Cardiac septum (tissue), 1 donor: ENCODE measurements at regions of chr3 and their contacts with region 1.

Region 1: GRCh38 chr3:122679085-122679881 is 1.4 kb upstream of the PARP14 start:
- DNase-seq: peak; percentile 90

Region 2: DNA sequence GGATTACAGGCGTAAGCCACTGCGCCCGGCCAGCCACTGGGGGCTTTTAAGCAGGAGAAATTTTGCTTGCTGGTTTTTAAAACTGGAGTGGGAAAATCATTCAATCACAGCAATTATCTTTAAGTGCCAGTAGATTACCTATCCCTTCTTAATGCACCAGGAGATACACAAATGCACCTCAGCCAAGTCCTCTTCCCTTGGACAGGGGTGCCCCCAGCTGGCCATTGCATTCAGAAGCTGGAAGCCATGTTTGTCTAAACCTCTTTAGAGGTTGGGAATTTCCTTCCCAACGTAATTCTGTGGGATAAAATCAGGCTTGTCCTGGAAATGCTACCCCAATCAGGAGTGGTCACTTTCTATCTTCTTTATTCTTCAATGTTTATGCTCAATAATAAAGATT is 322.9 kb before region 1 on chr3:
- intact Hi-C with region 1: no loop called
- DNase-seq: no peak

Region 3: DNA sequence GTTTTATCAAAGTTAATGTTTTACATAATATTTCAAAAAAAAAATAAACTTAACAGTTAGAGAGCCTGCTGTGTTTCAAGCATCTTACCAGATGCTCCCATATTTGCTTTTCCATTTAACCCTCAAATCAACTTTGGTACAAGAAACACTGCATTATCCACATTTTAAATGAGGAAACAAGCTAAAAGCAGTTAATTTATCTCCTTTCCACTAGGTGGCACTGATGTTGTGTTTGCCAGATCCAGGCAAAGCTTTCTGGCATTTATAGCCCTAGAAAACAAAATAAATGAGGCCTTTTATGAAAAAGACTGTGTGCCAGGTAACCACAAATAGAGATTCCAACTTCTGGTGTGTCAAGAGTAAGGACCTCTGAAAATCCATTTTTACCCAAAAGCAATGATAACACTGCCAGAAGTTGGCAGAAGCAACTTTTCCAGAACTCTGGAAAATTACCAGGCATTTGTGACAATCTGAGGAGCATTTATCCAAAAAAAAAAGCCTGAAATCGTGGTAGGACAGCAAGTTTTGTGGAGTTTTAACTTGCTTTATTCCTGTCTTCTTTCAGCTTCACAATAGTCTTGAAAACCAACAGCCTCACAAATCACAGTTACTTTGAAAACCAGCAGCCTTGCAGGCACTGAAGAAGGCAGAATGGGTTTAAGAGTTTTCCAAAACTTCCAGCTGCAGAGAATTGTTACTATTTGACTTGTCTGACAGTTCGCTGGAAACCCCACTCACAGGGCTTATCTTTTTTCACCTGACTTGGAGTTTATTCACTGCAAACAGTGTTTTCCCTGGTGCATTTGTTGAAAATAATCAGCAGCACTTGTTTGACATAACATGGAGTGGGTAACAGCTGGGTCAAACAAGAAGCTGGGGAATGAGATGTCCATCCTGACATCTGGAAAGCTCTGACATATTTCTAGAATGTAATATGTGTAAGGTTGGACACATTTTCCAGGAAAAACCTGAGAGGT is 286.1 kb before region 1 on chr3:
- intact Hi-C with region 1: loop called (anchors 5 kb)
- DNase-seq: no peak

Region 4: DNA sequence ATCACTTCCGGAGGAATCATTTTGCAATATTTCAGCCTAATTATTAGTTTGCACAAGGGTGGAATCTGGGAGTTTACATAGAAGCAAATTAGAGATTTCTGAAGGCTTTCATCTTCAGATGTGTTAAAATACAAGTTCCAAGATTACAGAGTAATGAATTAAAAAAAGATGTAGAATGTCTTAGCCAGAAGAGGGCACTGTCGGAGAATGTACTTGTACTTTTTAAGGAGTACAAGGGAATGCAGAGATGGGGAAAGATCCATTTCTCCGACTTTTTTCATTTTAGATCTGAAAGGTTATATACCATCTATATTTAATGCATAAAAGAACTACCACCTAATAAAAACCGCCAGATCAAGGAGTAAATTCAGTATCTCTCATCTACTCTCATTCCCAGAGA is 220.3 kb before region 1 on chr3:
- intact Hi-C with region 1: loop called (anchors 5 kb)
- DNase-seq: no peak

Region 5: DNA sequence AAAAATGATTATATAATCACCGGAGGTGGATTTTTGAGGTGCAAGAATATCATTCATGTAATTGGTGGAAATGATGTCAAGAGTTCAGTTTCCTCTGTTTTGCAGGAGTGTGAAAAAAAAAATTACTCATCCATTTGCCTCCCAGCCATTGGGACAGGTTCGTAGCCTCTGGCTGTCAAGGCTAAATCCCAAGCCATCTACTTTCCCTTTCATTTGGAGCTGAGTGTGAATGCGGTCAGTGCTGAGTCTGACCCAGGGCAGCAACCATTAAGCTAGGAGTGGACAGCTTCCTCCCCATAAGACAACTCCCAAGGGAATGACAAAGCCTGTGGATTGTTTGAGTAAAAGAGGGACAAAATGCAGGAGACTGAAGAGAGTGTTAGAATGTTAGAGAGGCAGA is 35.0 kb after region 1 on chr3:
- intact Hi-C with region 1: no loop called
- DNase-seq: no peak